Thyroid gland (tissue), 4 donors: ENCODE measurements at regions of chr22 and their contacts with region 1.

Region 1: DNA sequence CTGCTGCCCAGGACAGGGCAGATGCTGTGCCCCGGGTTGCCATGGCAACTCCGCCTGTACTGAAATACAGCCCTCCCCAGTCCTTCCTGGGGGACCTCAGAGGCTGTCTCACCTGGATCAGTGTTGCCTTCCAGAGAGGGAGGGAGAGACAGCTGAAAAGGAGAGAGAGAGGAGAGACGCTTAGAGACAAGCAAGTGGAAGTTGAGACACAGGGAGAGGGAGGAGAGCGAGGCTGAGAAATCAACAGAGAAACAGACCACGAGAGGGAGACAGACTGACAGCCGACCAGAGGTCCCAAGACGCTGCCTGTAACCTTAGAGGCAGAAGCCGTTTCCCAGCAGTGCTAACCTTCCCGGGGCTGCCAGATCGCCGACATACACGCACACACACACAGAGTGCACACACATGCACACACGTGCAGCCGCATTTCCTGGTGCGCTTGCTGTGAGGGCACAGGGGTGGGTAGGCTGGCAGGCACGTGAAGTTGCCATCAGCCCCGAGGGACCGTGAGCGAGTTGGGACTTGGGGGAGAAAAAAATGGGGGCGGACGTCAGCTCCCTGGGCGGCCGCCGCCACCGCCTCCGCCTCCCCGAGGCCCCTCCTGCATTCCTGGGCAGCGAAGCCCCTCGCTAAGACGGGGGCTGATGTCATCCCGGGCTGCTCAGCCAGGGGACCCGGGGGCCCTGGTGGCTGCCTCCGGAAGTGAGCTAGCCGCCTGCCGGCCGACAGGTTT is 88.6 kb upstream of the CRYBB3 start:
- DNase-seq: peak; percentile 83
- H3K4me3 ChIP-seq: peak overlapping the region; percentile 30 to 44 (median 40)
- H3K27ac ChIP-seq: peak overlapping the region; percentile 86 to 93 (median 87)
- H3K4me1 ChIP-seq: peaks cover 49 to 50% of the 10 kb centered on the region in 2 donors
- H3K27me3 ChIP-seq: no peaks in the 10 kb centered on the region
- CTCF ChIP-seq: peak; percentile 43 to 84 (median 57)
- POLR2A ChIP-seq: peak in 1 of 2 donors; percentile 36

Region 2: DNA sequence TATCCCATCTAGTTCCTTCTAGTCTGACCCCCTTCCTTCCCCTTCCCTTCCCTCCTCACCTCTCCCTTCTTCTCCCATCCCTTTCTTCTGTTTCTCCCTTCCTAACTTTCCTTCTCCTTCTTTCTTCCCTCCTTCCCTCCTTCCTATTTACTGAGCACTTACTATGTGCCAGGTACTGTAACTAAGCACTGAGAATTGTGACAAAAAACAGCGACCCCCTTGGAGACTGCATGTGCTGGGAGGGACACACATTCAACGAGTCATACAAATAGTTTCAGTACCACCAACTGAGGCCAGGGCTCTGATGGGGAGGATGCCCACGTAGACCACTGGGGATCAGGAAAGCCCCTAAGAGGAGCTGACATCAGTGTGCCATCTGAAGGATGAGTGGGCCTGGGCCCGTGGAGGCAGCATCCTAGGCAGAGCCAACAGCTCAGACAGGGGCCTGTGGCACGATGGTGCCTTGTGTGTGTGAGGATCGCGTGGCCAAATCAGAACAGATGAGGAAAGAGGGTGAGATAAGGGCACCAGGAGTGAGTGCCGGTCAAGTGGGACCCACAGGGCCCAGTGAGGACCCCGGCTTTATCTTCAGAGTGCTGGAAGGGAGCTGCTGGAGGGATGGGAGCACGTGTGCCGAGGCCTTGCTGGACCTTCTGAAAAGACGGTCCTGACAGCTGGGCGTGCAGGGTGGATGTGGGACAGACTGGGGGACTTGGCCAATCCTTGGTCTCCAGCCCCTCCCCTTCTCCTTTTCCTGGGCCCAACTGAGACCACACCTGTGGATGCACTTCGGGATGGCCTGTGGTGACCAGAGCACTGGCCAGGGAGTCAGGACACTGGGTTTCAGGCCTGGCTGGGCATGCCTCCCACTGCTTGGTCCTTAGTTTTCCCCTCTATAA is 50.3 kb after region 1 on chr22:
- intact Hi-C with region 1: no loop called
- DNase-seq: no peak
- H3K4me3 ChIP-seq: no peak overlapping the region
- H3K27ac ChIP-seq: no peak overlapping the region
- H3K4me1 ChIP-seq: peaks cover 21 to 32% of the 10 kb centered on the region in 2 donors
- H3K27me3 ChIP-seq: no peaks in the 10 kb centered on the region
- CTCF ChIP-seq: no peak
- POLR2A ChIP-seq: no peak

Region 3: DNA sequence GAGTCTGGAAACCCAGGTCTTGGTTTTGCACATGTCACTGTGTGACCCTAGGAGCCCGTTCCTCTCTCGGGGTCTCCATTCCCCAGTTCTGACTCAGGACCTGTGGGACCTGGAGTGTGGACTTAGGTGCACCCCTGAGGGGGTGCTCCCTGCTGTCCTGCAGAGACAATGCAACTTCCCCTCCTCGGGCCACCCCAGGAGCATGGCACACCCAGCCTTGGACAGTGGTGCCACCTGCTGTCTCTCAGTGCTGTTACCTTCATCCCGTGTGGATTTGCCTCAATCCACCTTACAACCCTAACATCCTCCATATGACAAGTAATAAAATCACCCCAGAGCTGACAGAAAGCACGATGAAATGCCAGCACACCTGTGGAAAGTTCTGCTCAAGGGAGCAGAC is 61.1 kb after region 1 on chr22:
- intact Hi-C with region 1: loop called (anchors 10 kb)
- DNase-seq: peak; percentile 34 to 41
- H3K4me3 ChIP-seq: no peak overlapping the region
- H3K27ac ChIP-seq: no peak overlapping the region
- H3K4me1 ChIP-seq: peaks cover 3 to 17% of the 10 kb centered on the region in 2 donors
- H3K27me3 ChIP-seq: no peaks in the 10 kb centered on the region
- CTCF ChIP-seq: peak in 5 of 6 experiments; percentile 30 to 51 (median 40)
- POLR2A ChIP-seq: no peak